ENCODE measurements at regions of chrX and their contacts with region 1.

Region 1: DNA sequence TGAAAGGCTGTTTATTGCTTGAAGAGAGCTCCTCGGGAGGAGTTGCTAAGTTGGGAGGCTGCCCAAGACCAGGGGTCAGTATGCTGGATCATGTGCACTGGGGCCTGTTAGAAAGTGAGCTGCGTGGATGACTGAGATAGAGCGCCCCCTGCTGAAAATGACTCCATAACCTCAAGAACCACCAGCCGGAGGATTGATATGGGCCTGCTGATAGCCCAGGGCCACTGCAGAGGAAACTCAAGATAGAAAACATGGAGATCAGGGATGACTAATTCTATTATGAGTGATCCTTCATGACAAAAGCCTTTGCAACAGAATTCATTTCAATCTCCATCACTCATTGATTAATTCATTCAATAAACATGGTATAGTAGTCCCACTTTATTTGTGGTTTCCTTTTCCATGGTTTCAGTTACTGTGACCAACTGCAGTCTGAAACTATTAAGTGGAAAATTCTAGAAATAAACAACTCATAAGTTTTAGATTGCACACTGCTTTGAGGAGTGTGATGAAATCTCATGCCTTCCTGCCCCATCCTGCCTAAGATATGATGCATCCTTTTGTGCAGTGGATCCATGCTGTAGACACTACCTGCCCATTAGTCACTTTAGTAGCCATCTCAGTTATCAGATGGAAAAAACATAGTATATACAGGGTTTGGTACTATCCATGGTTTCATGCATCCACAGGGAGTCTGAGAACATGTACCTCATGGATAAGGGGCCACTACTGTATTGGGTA is 126.7 kb upstream of the MBNL3 start:
- DNase-seq: peak; percentile 55
- ATAC-seq: peak; percentile 71
- H3K4me3 ChIP-seq: no peak overlapping the region
- H3K27ac ChIP-seq: no peak overlapping the region
- H3K4me1 ChIP-seq: no peaks in the 10 kb centered on the region
- H3K27me3 ChIP-seq: no peaks in the 10 kb centered on the region
- CTCF ChIP-seq: peak; percentile 74

Region 2: DNA sequence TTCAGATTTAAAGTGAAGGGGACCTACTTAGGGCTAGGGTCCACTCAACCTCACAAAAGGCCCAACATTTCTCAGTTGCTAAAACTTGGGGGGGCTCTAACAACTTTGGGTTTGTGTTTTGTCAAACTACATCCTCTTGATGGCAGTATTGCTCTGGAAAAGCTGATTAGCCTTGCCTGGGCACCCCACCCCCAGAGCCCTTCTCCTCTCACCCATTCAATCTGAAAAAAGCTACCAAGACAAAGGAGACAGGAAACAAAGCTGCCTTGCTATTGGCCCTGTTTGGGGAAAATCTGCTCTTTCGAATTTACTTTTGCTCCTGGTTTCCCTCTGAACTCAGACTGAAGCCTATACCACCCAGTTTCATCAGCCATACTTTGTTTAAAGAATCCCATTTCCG is 787.6 kb before region 1 on chrX:
- CTCF ChIA-PET with region 1: no interaction called
- POLR2A ChIA-PET with region 1: no interaction called
- intact Hi-C with region 1: loop called (anchors 5 kb)
- DNase-seq: peak; percentile 55
- ATAC-seq: peak; percentile 53
- H3K4me3 ChIP-seq: 0 out of 2 replicates have a peak overlapping the region, but pooled peaks have one; percentile 12
- H3K27ac ChIP-seq: no peak overlapping the region
- H3K4me1 ChIP-seq: no peaks in the 10 kb centered on the region
- H3K27me3 ChIP-seq: no peaks in the 10 kb centered on the region
- CTCF ChIP-seq: peak; percentile 69

Region 3: GRCh38 chrX:132086672-132087071 is 528.9 kb before region 1 on chrX:
- CTCF ChIA-PET with region 1: no interaction called
- POLR2A ChIA-PET with region 1: no interaction called
- intact Hi-C with region 1: loop called (anchors 10 kb)
- DNase-seq: peak; percentile 65
- ATAC-seq: peak; percentile 77
- H3K4me3 ChIP-seq: no peak overlapping the region
- H3K27ac ChIP-seq: no peak overlapping the region
- H3K4me1 ChIP-seq: peaks cover 22% of the 10 kb centered on the region
- H3K27me3 ChIP-seq: no peaks in the 10 kb centered on the region
- CTCF ChIP-seq: no peak

Region 4: GRCh38 chrX:132209527-132209926 is 406.0 kb before region 1 on chrX:
- CTCF ChIA-PET with region 1: no interaction called
- POLR2A ChIA-PET with region 1: no interaction called
- intact Hi-C with region 1: no loop called
- DNase-seq: no peak
- ATAC-seq: no peak; the same call in 1 of the 2 replicates
- H3K4me3 ChIP-seq: no peak overlapping the region
- H3K27ac ChIP-seq: no peak overlapping the region
- H3K4me1 ChIP-seq: no peaks in the 10 kb centered on the region
- H3K27me3 ChIP-seq: no peaks in the 10 kb centered on the region
- CTCF ChIP-seq: no peak

Region 5: DNA sequence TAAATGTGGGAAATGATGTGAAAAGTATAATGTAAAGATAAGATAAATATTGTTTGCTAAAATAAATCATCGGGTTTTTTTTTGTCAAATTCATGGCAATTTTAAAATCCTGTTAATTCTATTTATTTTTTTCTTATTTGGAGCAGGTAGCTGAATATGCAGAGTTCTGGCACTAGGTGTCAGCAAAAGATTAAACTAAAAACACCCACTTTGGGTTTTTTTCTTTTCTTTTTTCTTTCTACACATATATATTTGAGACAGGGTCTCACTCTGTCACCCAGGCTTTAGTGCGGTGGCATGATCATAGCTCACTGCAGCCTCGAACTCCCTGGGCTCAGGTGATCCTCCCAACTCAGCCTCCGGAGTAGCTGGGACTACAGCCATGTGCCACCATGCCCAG is 389.4 kb before region 1 on chrX:
- CTCF ChIA-PET with region 1: interaction called, 4 read pairs
- POLR2A ChIA-PET with region 1: no interaction called
- intact Hi-C with region 1: loop called (anchors 1 kb)
- DNase-seq: peak; percentile 34
- ATAC-seq: no peak
- H3K4me3 ChIP-seq: no peak overlapping the region
- H3K27ac ChIP-seq: no peak overlapping the region
- H3K4me1 ChIP-seq: no peaks in the 10 kb centered on the region
- H3K27me3 ChIP-seq: no peaks in the 10 kb centered on the region
- CTCF ChIP-seq: peak; percentile 59

Region 6: GRCh38 chrX:132292793-132293192 is 322.8 kb before region 1 on chrX:
- CTCF ChIA-PET with region 1: interaction called, 18 read pairs
- POLR2A ChIA-PET with region 1: no interaction called
- intact Hi-C with region 1: loop called (anchors 1 kb)
- DNase-seq: peak; percentile 66
- ATAC-seq: peak; percentile 74
- H3K4me3 ChIP-seq: no peak overlapping the region
- H3K27ac ChIP-seq: no peak overlapping the region
- H3K4me1 ChIP-seq: no peaks in the 10 kb centered on the region
- H3K27me3 ChIP-seq: no peaks in the 10 kb centered on the region
- CTCF ChIP-seq: peak; percentile 75

Region 7: DNA sequence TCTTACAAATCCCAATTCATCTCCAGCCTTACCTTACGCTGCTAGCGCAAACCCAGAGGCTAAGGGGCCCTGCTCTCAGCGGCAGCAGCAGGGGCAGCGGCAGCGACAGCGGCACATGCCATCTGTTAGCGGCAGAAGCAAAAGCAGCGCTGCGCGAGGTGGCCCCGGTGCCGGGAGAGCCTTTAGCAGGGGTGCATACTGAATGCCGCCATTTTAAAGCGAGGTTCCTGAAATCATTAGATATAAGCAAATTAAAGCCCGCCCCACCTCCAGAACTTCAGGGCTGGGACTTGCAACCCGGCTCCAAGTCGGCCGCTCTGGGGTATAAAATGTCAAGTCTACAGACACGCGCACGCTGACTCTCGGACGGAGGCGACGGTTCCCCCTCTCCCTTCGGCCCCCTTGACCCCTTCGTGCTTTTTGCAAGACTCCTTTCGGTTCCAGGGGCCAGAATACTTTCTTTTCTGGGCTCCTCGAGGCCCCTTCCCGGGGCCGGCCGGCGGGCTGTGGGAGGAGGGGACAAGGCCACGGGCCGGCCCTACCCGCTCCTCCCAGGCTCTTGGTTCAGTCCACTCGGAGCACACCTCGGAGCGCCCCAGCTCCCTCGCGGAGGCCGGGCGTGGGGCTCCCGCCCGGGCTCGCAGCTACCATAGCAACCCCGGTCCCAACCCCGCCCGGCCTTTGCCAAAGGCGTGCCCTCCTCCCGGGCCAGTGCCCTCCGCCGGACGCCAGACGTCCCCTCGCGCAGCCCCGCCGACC is 126.6 kb before region 1 on chrX and contains the start of gene MBNL3:
- CTCF ChIA-PET with region 1: no interaction called
- POLR2A ChIA-PET with region 1: no interaction called
- intact Hi-C with region 1: loop called (anchors 1 kb)
- DNase-seq: peak; percentile 70
- ATAC-seq: peak; percentile 74
- H3K4me3 ChIP-seq: peak within 1 kb of the TSS; percentile 88
- H3K27ac ChIP-seq: peak within 1 kb of the TSS; percentile 81
- H3K4me1 ChIP-seq: peaks cover 12% of the 10 kb centered on the region
- H3K27me3 ChIP-seq: no peaks in the 10 kb centered on the region
- CTCF ChIP-seq: no peak
- total RNA-seq, gene MBNL3: 4.4 and 9.7 TPM in 2 replicates

Region 8: GRCh38 chrX:132692066-132692465 is 76.5 kb after region 1 on chrX:
- CTCF ChIA-PET with region 1: no interaction called
- POLR2A ChIA-PET with region 1: no interaction called
- intact Hi-C with region 1: no loop called
- DNase-seq: no peak
- ATAC-seq: no peak
- H3K4me3 ChIP-seq: no peak overlapping the region
- H3K27ac ChIP-seq: no peak overlapping the region
- H3K4me1 ChIP-seq: no peaks in the 10 kb centered on the region
- H3K27me3 ChIP-seq: no peaks in the 10 kb centered on the region
- CTCF ChIP-seq: no peak